Left cardiac atrium (tissue), 4 donors: ENCODE measurements at regions of chrX and their contacts with region 1.

Region 1: GRCh38 chrX:65705439-65705838 is 38.0 kb downstream of the MSN start:
- DNase-seq: no peak
- ATAC-seq: no peak

Region 2: GRCh38 chrX:65595460-65595876 is 110.0 kb before region 1 on chrX:
- intact Hi-C with region 1: loop called in 1 of 2 experiments (anchors 2 kb)
- DNase-seq: peak; percentile 98
- ATAC-seq: peak; percentile 90 to 94

Region 3: GRCh38 chrX:65667503-65668376 is 37.7 kb before region 1 on chrX and contains the start of gene MSN:
- intact Hi-C with region 1: loop called in 1 of 2 experiments (anchors 5 kb)
- DNase-seq: peak; percentile 85
- ATAC-seq: peak; percentile 93
- total RNA-seq, gene MSN: 139 to 245 TPM

Region 4: DNA sequence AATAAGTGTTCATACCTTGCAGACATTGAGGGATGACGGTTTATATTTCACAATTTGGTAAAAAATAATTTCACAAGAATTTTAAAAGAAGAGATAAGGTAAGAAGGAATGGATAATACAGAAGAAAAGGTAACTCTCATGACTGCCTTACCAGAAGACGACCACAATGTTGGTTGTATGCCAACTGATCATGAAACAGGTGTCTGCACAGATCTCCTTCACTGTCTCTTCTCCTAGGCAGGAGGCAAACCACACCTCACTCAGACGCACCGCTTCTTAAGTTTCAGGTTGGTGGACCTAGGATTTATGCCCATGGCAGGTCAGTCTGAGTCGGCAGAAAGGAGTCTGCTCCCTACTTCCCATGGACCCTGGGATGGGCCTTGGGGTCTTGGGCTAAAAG is 157.2 kb after region 1 on chrX:
- intact Hi-C with region 1: no loop called
- DNase-seq: no peak
- ATAC-seq: no peak

Region 5: DNA sequence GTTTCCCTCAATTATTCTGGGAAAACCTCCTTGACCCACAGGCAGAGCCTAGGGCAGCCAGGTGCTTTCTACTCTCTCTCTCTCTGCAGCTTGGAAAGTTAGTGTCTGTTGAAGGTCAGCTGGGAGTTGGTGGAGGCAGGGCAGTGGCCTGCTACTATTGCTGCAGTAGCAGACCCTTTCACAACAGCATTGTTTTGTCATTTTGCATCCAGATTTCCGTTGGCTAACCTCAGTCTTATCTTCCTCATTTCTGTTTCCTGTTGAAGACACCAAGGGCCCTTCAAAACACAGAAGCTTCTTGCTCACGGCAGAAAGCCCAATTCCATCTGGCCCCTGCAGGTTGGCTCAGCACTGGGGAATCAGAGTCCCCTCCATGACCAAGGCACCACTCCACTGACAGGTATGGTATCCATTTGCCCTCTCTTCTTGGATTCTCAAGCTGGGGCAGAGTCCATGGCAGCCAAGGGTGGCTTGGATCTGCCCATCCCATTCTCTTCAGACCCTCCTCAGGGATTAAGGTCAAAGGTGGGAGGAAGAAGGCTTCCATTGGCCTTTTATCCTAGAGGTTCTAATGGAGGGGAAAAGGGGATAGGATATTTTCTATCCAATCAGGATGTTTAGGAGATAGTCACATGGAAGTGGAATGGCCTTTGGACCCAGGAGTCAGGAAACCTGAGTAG is 309.9 kb after region 1 on chrX:
- intact Hi-C with region 1: no loop called
- DNase-seq: no peak
- ATAC-seq: peak; percentile 64 to 75